ENCODE measurements at regions of chr1 and their contacts with region 1.

Region 1: GRCh38 chr1:113928941-113929749 is at the start of gene HIPK1:
- DNase-seq: peak; percentile 60
- ATAC-seq: peak; percentile 73
- H3K4me3 ChIP-seq: peak within 1 kb of the TSS; percentile 78
- H3K27ac ChIP-seq: peak within 1 kb of the TSS; percentile 97
- H3K4me1 ChIP-seq: peaks cover 4% of the 10 kb centered on the region
- H3K27me3 ChIP-seq: no peaks in the 10 kb centered on the region
- CTCF ChIP-seq: no peak
- EP300 ChIP-seq: 0 out of 4 replicates have a peak, but pooled peaks of 1 of the 2 experiments have one; percentile 36
- POLR2A ChIP-seq: peak; percentile 88
- RAD21 ChIP-seq: 0 out of 2 replicates have a peak, but pooled peaks have one; percentile 7
- polyA plus RNA-seq, gene HIPK1: 4.2 to 4.5 TPM

Region 2: GRCh38 chr1:113759333-113760101 is 169.6 kb before region 1 on chr1 and contains the start of gene PHTF1:
- CTCF ChIA-PET with region 1: interaction called, 3 read pairs
- POLR2A ChIA-PET with region 1: interaction called, 5 read pairs
- RAD21 ChIA-PET with region 1: interaction called, 9 read pairs
- SMC1A ChIA-PET with region 1: interaction called, 3 read pairs
- in situ Hi-C with region 1: no loop called
- intact Hi-C with region 1: loop called (anchors 2 kb)
- DNase-seq: no peak
- ATAC-seq: peak; percentile 91
- H3K4me3 ChIP-seq: peak within 1 kb of the TSS; percentile 85
- H3K27ac ChIP-seq: peak within 1 kb of the TSS; percentile 94
- H3K4me1 ChIP-seq: no peaks in the 10 kb centered on the region; the same call in 1 of the 2 replicates
- H3K27me3 ChIP-seq: no peaks in the 10 kb centered on the region
- CTCF ChIP-seq: no peak
- EP300 ChIP-seq: no peak
- POLR2A ChIP-seq: peak; percentile 89
- RAD21 ChIP-seq: no peak
- polyA plus RNA-seq, gene PHTF1: 7.8 to 12.6 TPM

Region 3: GRCh38 chr1:113835642-113836307 is 93.4 kb before region 1 on chr1:
- CTCF ChIA-PET with region 1: interaction called, 30 read pairs
- POLR2A ChIA-PET with region 1: interaction called, 6 read pairs
- RAD21 ChIA-PET with region 1: interaction called, 19 read pairs
- SMC1A ChIA-PET with region 1: interaction called, 32 read pairs
- in situ Hi-C with region 1: loop called (anchors 5 kb)
- intact Hi-C with region 1: loop called (anchors 5 kb)
- DNase-seq: no peak
- ATAC-seq: peak; percentile 45; the same call in 2 of the 3 replicates
- H3K4me3 ChIP-seq: no peak overlapping the region
- H3K27ac ChIP-seq: no peak overlapping the region
- H3K4me1 ChIP-seq: no peaks in the 10 kb centered on the region
- H3K27me3 ChIP-seq: no peaks in the 10 kb centered on the region
- CTCF ChIP-seq: peak; percentile 9 to 51 (median 25); a peak in 4 of 6 replicates
- EP300 ChIP-seq: no peak
- POLR2A ChIP-seq: no peak
- RAD21 ChIP-seq: peak; percentile 69

Region 4: GRCh38 chr1:113881661-113882060 is 47.5 kb before region 1 on chr1:
- CTCF ChIA-PET with region 1: interaction called, 8 read pairs
- POLR2A ChIA-PET with region 1: interaction called, 6 read pairs
- RAD21 ChIA-PET with region 1: interaction called, 9 read pairs
- SMC1A ChIA-PET with region 1: interaction called, 18 read pairs
- in situ Hi-C with region 1: no loop called
- intact Hi-C with region 1: no loop called
- DNase-seq: no peak
- ATAC-seq: no peak
- H3K4me3 ChIP-seq: no peak overlapping the region
- H3K27ac ChIP-seq: peak overlapping the region; percentile 40
- H3K4me1 ChIP-seq: peaks cover 28% of the 10 kb centered on the region
- H3K27me3 ChIP-seq: no peaks in the 10 kb centered on the region
- CTCF ChIP-seq: no peak
- EP300 ChIP-seq: no peak
- POLR2A ChIP-seq: no peak
- RAD21 ChIP-seq: no peak

Region 5: DNA sequence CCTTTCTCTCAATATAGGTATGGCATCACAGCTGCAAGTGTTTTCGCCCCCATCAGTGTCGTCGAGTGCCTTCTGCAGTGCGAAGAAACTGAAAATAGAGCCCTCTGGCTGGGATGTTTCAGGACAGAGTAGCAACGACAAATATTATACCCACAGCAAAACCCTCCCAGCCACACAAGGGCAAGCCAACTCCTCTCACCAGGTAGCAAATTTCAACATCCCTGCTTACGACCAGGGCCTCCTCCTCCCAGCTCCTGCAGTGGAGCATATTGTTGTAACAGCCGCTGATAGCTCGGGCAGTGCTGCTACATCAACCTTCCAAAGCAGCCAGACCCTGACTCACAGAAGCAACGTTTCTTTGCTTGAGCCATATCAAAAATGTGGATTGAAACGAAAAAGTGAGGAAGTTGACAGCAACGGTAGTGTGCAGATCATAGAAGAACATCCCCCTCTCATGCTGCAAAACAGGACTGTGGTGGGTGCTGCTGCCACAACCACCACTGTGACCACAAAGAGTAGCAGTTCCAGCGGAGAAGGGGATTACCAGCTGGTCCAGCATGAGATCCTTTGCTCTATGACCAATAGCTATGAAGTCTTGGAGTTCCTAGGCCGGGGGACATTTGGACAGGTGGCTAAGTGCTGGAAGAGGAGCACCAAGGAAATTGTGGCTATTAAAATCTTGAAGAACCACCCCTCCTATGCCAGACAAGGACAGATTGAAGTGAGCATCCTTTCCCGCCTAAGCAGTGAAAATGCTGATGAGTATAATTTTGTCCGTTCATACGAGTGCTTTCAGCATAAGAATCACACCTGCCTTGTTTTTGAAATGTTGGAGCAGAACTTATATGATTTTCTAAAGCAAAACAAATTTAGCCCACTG is 11.5 kb after region 1 on chr1:
- CTCF ChIA-PET with region 1: interaction called, 36 read pairs
- POLR2A ChIA-PET with region 1: interaction called, 34 read pairs
- RAD21 ChIA-PET with region 1: interaction called, 33 read pairs
- SMC1A ChIA-PET with region 1: interaction called, 99 read pairs
- in situ Hi-C with region 1: no loop called
- intact Hi-C with region 1: no loop called
- DNase-seq: no peak
- ATAC-seq: peak; percentile 81
- H3K4me3 ChIP-seq: peak overlapping the region; percentile 21; the same call in 1 of the 2 replicates
- H3K27ac ChIP-seq: peak overlapping the region; percentile 7
- H3K4me1 ChIP-seq: peaks cover 17% of the 10 kb centered on the region
- H3K27me3 ChIP-seq: no peaks in the 10 kb centered on the region
- CTCF ChIP-seq: no peak
- EP300 ChIP-seq: no peak
- POLR2A ChIP-seq: no peak
- RAD21 ChIP-seq: no peak

Region 6: GRCh38 chr1:113978863-113979702 is 49.9 kb after region 1 on chr1 and contains the start of gene OLFML3:
- CTCF ChIA-PET with region 1: interaction called, 6 read pairs
- POLR2A ChIA-PET with region 1: no interaction called
- RAD21 ChIA-PET with region 1: interaction called, 13 read pairs
- SMC1A ChIA-PET with region 1: interaction called, 8 read pairs
- in situ Hi-C with region 1: no loop called
- intact Hi-C with region 1: no loop called
- DNase-seq: peak; percentile 31
- ATAC-seq: peak; percentile 86
- H3K4me3 ChIP-seq: no peak within 1 kb of the TSS
- H3K27ac ChIP-seq: no peak within 1 kb of the TSS
- H3K4me1 ChIP-seq: peaks cover 3% of the 10 kb centered on the region; the same call in 1 of the 2 replicates
- H3K27me3 ChIP-seq: no peaks in the 10 kb centered on the region
- CTCF ChIP-seq: peak; percentile 72 to 80 (median 79)
- EP300 ChIP-seq: no peak
- POLR2A ChIP-seq: no peak
- RAD21 ChIP-seq: peak; percentile 80
- polyA plus RNA-seq, gene OLFML3: not detected

Region 7: DNA sequence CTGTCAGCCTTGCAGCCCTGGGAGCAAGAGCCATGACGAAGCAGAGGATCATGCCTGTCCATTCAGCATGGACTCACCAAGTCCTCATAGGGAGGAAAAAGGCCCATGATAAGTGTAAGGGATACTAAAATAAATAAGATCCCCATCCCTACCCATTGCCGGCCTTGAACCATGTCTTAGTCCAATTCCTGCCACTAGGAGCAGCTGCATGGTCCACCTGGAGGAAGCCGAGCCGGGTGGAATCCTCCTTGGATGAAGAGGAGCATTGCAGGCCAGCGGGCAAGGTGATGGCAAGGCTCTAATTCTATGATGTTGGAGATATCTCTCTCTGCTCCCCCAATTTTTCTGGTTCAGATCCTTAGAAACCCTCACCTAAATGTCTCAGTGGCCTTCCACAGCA is 263.2 kb after region 1 on chr1:
- CTCF ChIA-PET with region 1: no interaction called
- POLR2A ChIA-PET with region 1: no interaction called
- RAD21 ChIA-PET with region 1: no interaction called
- SMC1A ChIA-PET with region 1: no interaction called
- in situ Hi-C with region 1: no loop called
- intact Hi-C with region 1: no loop called
- DNase-seq: no peak
- ATAC-seq: no peak
- H3K4me3 ChIP-seq: no peak overlapping the region
- H3K27ac ChIP-seq: no peak overlapping the region
- H3K4me1 ChIP-seq: no peaks in the 10 kb centered on the region
- H3K27me3 ChIP-seq: peaks cover 0 to 3% of the 10 kb centered on the region in 2 experiments; a peak in 2 of 4 replicates
- CTCF ChIP-seq: no peak
- EP300 ChIP-seq: no peak
- POLR2A ChIP-seq: no peak
- RAD21 ChIP-seq: no peak